ENCODE measurements at regions of chr10 and their contacts with region 1.

Region 1: DNA sequence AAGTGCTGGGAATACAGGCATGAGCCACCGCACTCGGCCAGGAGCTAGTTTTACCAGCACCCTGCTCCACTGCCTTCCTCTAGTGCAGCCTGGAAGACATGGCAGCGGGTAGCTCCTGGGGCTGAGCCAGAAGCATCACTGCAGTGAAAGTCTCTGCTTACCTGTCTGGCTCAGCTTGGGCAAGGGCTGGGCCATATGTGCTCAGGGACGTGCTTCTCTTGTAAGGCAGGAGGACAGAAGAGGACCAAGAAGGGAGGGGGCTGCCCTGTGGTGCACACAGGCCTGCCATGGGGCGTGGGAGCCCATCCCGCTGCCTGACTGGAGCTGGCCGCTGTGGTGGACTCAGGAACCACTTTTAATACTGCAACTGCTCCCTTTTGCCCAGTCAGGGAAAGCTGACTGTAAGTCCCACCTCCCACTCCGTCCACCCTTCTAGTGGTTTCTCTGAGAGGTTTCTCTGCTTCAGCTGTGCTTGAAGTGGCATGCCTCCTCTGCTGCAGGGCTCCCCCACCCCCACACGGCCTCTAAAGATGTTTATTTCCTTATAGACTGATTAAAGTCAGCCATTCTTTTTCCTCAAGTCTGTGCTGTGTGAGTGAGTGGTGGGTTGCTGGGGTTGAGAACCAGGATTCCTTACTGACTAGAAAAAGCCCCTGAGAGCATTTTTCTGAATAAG is 25.3 kb upstream of the C10orf95 start:
- DNase-seq: no peak
- ATAC-seq: no peak
- H3K4me3 ChIP-seq: no peak overlapping the region
- H3K27ac ChIP-seq: no peak overlapping the region
- H3K4me1 ChIP-seq: no peaks in the 10 kb centered on the region
- CTCF ChIP-seq: no peak
- EP300 ChIP-seq: no peak
- POLR2A ChIP-seq: no peak
- RAD21 ChIP-seq: no peak

Region 2: GRCh38 chr10:102208311-102209035 is 268.1 kb before region 1 on chr10:
- CTCF ChIA-PET with region 1: no interaction called
- POLR2A ChIA-PET with region 1: no interaction called
- DNase-seq: no peak
- ATAC-seq: no peak
- H3K4me3 ChIP-seq: no peak overlapping the region
- H3K27ac ChIP-seq: no peak overlapping the region
- H3K4me1 ChIP-seq: no peaks in the 10 kb centered on the region
- CTCF ChIP-seq: no peak
- EP300 ChIP-seq: no peak
- POLR2A ChIP-seq: no peak
- RAD21 ChIP-seq: no peak

Region 3: GRCh38 chr10:102384053-102384452 is 92.6 kb before region 1 on chr10:
- CTCF ChIA-PET with region 1: interaction called, 15 read pairs
- POLR2A ChIA-PET with region 1: no interaction called
- DNase-seq: no peak
- ATAC-seq: peak in 1 of 2 experiments; percentile 63; a peak in 3 of 6 replicates
- H3K4me3 ChIP-seq: no peak overlapping the region
- H3K27ac ChIP-seq: no peak overlapping the region
- H3K4me1 ChIP-seq: no peaks in the 10 kb centered on the region
- CTCF ChIP-seq: no peak
- EP300 ChIP-seq: no peak
- POLR2A ChIP-seq: no peak
- RAD21 ChIP-seq: no peak

Region 4: DNA sequence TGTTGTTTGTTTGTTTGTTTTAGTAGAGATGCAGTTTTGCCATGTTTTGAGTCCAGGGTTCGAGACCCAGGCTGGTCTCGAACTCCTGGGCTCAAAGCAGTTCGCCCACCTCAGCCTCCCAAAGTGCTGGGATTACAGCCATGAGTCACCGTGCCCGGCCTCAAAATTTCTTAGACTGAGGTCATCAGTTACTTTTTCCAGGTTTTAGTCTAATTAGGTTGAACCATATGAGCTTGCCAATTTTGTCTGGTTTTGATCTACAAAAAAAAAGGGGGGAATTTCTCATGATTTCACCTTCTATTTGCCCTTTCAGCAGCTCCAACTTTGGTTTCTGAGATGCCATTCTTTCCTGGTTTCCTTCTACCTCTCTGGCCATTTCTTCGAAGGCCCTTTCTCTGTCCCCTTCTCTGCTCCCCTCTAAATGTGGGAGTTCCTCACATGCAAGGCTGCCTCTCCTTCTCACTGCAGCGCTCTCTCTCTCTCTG is 49.8 kb before region 1 on chr10:
- CTCF ChIA-PET with region 1: interaction called, 54 read pairs
- POLR2A ChIA-PET with region 1: interaction called, 3 read pairs
- DNase-seq: no peak
- ATAC-seq: no peak
- H3K4me3 ChIP-seq: no peak overlapping the region
- H3K27ac ChIP-seq: no peak overlapping the region
- H3K4me1 ChIP-seq: peaks cover 19% of the 10 kb centered on the region
- CTCF ChIP-seq: no peak
- EP300 ChIP-seq: no peak
- POLR2A ChIP-seq: no peak
- RAD21 ChIP-seq: no peak

Region 5: GRCh38 chr10:102461187-102462054 is 15.2 kb before region 1 on chr10:
- CTCF ChIA-PET with region 1: interaction called, 84 read pairs
- POLR2A ChIA-PET with region 1: no interaction called
- DNase-seq: peak; percentile 87 to 98
- ATAC-seq: peak; percentile 90 to 97
- H3K4me3 ChIP-seq: peak overlapping the region; percentile 58
- H3K27ac ChIP-seq: peak overlapping the region; percentile 77 to 84
- H3K4me1 ChIP-seq: peaks cover 12% of the 10 kb centered on the region
- CTCF ChIP-seq: no peak
- EP300 ChIP-seq: no peak
- POLR2A ChIP-seq: peak; percentile 67
- RAD21 ChIP-seq: no peak

Measured in A549 (cell line).